Activated CD4-positive, alpha-beta memory T cell treated with anti-CD3 and anti-CD28 coated beads for 36 hours (primary cell): ENCODE measurements at regions of chr15 and their contacts with region 1.

Region 1: DNA sequence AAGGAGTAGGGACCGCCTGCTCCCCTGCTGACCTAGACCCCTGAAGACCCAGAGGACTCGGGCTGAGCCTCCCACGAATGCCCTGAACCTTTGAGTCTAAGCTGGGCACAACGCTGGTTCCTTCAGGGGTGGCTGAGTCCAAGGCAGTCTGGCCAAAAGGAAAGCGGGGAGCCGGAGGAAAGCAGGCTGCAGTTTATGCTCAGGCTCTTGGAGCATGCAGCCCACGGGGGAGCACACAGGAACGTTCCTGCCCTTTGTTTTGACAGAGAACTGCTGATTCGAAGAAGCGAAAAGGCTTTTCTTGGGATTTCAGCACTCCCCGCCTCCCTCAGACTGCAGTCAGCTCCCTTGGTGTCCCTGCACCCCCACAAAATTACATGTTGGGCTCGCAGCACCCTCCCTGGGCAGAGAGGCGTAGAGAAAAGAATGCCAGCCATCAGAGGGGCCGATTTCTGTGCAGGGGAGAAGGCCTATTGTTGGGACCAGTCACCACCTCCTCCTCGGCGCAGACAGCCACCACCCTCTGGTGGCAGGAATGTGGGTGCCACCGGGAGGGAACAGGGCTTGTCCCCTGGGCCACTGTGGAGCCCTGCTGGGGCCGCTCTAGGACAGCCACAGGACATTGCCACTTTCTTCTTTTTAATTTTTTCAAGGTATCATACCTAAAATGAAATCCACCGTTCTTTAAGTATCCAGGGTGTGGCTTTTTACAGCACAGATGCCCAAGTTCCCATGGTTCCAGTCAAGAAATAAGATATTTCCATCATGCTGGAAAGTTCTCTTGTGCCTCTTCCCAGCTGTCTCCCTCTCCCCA is 72.2 kb downstream of the SMAD6 start:
- DNase-seq: peak; percentile 63
- H3K4me3 Mint-ChIP-seq: no peak overlapping the region
- H3K27ac Mint-ChIP-seq: no peak overlapping the region
- H3K4me1 Mint-ChIP-seq: no peaks in the 10 kb centered on the region
- H3K27me3 Mint-ChIP-seq: no peaks in the 10 kb centered on the region

Region 2: GRCh38 chr15:66603301-66604179 is 170.7 kb before region 1 on chr15:
- CTCF ChIA-PET with region 1: interaction called, 4 read pairs
- POLR2A ChIA-PET with region 1: no interaction called
- intact Hi-C with region 1: loop called (anchors 5 kb)
- DNase-seq: peak; percentile 71
- H3K4me3 Mint-ChIP-seq: no peak overlapping the region
- H3K27ac Mint-ChIP-seq: no peak overlapping the region
- H3K4me1 Mint-ChIP-seq: no peaks in the 10 kb centered on the region
- H3K27me3 Mint-ChIP-seq: peaks cover 5% of the 10 kb centered on the region

Region 3: GRCh38 chr15:66883322-66883911 is 109.2 kb after region 1 on chr15:
- CTCF ChIA-PET with region 1: no interaction called
- POLR2A ChIA-PET with region 1: no interaction called
- intact Hi-C with region 1: no loop called
- DNase-seq: no peak
- H3K4me3 Mint-ChIP-seq: no peak overlapping the region
- H3K27ac Mint-ChIP-seq: no peak overlapping the region
- H3K4me1 Mint-ChIP-seq: no peaks in the 10 kb centered on the region
- H3K27me3 Mint-ChIP-seq: peaks cover 4% of the 10 kb centered on the region

Region 4: GRCh38 chr15:66901336-66902100 is 127.3 kb after region 1 on chr15:
- CTCF ChIA-PET with region 1: no interaction called
- POLR2A ChIA-PET with region 1: no interaction called
- intact Hi-C with region 1: no loop called
- DNase-seq: no peak
- H3K4me3 Mint-ChIP-seq: no peak overlapping the region
- H3K27ac Mint-ChIP-seq: no peak overlapping the region
- H3K4me1 Mint-ChIP-seq: peaks cover 3% of the 10 kb centered on the region
- H3K27me3 Mint-ChIP-seq: peaks cover 3% of the 10 kb centered on the region